Endothelial cell of umbilical vein (primary cell): ENCODE measurements at regions of chr2 and their contacts with region 1.

Region 1: GRCh38 chr2:66434679-66435548 is at the start of gene MEIS1:
- DNase-seq: peak; percentile 95
- H3K4me3 ChIP-seq: peak within 1 kb of the TSS; percentile 64 to 97 (median 97)
- H3K27ac ChIP-seq: peak within 1 kb of the TSS; percentile 87
- H3K4me1 ChIP-seq: peaks cover 23% of the 10 kb centered on the region
- H3K27me3 ChIP-seq: peaks cover 0 to 6% of the 10 kb centered on the region in 2 experiments
- CTCF ChIP-seq: no peak
- POLR2A ChIP-seq: peak; percentile 90
- total RNA-seq, gene MEIS1: 26.3 and 26.5 TPM in 2 replicates

Region 2: DNA sequence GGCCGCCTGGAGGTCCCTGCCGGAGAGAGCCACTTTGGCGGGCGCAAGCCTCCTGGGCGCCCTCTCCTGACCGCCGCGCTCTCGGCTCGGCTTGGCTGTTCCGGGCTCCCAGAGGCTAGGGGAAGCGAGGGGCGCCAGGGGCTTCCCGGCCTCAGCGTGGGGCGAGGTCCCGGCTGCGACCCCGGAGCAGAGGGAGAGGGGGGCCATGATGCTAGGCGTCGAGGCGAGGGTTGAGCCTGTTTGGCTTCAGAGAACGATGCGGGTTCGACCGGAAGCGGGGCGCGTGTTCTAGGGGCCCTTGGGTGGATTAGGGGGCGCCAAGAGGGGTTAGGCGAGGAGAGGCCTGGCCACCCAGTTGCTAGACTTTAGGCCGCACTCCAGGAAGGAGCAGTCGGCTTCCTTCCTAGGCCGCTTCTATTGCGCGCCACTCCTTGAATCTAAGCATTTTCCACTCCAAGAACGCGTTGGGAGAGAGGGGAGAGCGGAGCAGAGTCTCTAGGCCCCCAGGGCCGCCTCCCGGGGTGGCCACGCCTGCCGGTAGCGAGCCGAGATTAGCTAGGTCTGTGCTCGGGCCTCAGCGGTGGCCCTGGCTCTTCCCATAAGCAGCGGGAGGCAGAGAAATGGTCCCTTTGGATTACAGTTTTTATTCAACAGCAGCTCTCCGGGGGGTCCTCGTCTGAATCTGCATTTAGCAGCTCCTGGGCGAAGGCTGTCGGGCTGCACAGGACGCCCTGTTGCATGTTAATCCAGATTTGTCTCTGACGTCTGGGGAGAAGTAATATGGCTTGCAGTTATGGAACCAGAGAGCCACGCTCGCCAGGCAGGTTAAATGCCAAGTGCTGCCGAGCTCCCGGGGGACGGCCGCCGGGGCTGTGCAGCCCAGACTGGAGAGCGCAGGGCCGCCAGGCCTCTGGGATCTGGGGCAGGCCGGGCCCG is 11.3 kb after region 1 on chr2:
- CTCF ChIA-PET with region 1: interaction called, 11 read pairs
- POLR2A ChIA-PET with region 1: interaction called, 4 read pairs
- dilution Hi-C with region 1: no loop called
- intact Hi-C with region 1: no loop called
- DNase-seq: no peak
- H3K4me3 ChIP-seq: peak overlapping the region; percentile 3 to 46 (median 8)
- H3K27ac ChIP-seq: no peak overlapping the region
- H3K4me1 ChIP-seq: peaks cover 3% of the 10 kb centered on the region
- H3K27me3 ChIP-seq: no peaks in the 10 kb centered on the region
- CTCF ChIP-seq: peak; percentile 19 to 51
- POLR2A ChIP-seq: no peak

Region 3: DNA sequence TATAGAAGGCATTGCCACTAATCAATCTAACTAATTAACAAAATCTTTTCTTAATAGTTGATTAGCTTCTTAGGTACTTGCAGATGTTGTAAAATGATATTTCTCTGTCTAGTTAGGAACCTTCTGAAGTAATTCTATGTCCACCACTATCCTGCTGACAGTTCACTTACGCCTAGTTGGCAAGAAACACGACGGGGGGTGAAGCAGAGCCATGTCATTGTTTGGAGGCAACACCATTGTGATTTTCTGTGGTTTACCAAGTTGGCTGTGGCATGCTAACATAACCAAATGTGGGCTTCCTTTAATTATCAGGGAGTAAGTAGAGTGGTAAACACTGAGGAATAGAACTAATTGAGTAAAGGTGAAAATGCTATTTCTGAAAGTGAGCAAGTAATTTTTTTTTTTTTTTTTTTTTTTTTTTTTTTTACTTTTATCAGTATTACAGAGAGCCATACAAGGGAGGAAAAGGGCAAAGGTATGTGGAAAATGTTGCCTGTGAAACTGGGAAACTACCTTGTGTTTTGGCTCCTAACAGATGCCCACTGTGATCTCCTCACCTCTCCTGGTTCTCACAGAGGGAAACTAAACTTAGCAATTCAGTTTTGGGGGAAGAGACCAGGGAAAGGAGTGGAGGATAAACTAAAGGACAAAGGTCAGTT is 126.9 kb after region 1 on chr2:
- CTCF ChIA-PET with region 1: no interaction called
- POLR2A ChIA-PET with region 1: no interaction called
- dilution Hi-C with region 1: no loop called
- intact Hi-C with region 1: loop called (anchors 1 kb)
- DNase-seq: peak; percentile 34
- H3K4me3 ChIP-seq: no peak overlapping the region
- H3K27ac ChIP-seq: peak overlapping the region; percentile 55
- H3K4me1 ChIP-seq: peaks cover 20% of the 10 kb centered on the region
- H3K27me3 ChIP-seq: no peaks in the 10 kb centered on the region
- CTCF ChIP-seq: no peak
- POLR2A ChIP-seq: no peak

Region 4: DNA sequence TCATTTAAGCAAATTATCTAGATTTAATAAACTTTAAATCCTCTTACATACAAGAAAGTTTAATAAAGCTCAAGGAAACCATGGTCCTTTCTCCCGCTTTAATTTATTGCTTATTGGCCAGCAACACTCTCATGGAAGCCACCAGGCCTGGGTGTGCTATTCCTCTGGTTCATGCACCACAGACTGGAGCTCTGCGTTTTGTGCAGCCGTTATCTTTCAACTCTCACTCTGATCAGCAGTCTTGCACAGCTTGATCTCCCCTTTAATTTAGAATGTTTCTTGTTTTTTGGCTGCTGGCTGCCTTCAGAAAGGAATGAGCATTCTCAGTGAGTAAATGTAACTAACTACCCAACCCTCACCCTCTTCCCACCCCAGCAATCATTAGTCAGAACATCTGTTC is 318.7 kb after region 1 on chr2:
- CTCF ChIA-PET with region 1: no interaction called
- POLR2A ChIA-PET with region 1: no interaction called
- dilution Hi-C with region 1: no loop called
- intact Hi-C with region 1: no loop called
- DNase-seq: no peak
- H3K4me3 ChIP-seq: no peak overlapping the region
- H3K27ac ChIP-seq: no peak overlapping the region
- H3K4me1 ChIP-seq: no peaks in the 10 kb centered on the region
- H3K27me3 ChIP-seq: no peaks in the 10 kb centered on the region
- CTCF ChIP-seq: no peak
- POLR2A ChIP-seq: no peak

Region 5: GRCh38 chr2:67215214-67216055 is 780.5 kb after region 1 on chr2:
- CTCF ChIA-PET with region 1: interaction called, 12 read pairs
- POLR2A ChIA-PET with region 1: no interaction called
- dilution Hi-C with region 1: no loop called
- intact Hi-C with region 1: no loop called
- DNase-seq: peak; percentile 77
- H3K4me3 ChIP-seq: no peak overlapping the region
- H3K27ac ChIP-seq: no peak overlapping the region
- H3K4me1 ChIP-seq: no peaks in the 10 kb centered on the region
- H3K27me3 ChIP-seq: no peaks in the 10 kb centered on the region
- CTCF ChIP-seq: peak; percentile 74 to 85
- POLR2A ChIP-seq: no peak

Region 6: DNA sequence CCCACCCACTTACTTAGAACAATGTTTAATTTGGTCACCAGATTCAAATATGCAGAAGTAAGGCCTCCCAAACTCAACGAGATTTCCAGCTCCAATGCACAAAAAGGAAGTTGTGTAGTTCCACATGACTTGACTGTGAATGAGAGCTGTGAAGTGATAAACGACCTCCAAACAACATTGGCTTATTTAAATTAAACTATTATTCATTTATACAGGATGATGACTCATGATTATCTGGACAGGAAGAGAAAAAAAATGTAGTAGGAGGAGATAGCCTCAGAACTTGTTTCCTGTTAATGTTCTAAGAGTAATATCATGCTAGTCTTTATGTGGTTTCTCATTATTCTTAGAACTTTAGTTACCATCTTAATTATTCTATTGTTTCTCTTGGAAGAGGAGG is 1390.6 kb after region 1 on chr2:
- CTCF ChIA-PET with region 1: no interaction called
- POLR2A ChIA-PET with region 1: no interaction called
- dilution Hi-C with region 1: no loop called
- intact Hi-C with region 1: loop called (anchors 2 kb)
- DNase-seq: peak; percentile 92
- H3K4me3 ChIP-seq: peak overlapping the region in 1 of 3 experiments; percentile 43
- H3K27ac ChIP-seq: peak overlapping the region; percentile 80
- H3K4me1 ChIP-seq: peaks cover 22% of the 10 kb centered on the region
- H3K27me3 ChIP-seq: no peaks in the 10 kb centered on the region
- CTCF ChIP-seq: no peak
- POLR2A ChIP-seq: no peak

Region 7: DNA sequence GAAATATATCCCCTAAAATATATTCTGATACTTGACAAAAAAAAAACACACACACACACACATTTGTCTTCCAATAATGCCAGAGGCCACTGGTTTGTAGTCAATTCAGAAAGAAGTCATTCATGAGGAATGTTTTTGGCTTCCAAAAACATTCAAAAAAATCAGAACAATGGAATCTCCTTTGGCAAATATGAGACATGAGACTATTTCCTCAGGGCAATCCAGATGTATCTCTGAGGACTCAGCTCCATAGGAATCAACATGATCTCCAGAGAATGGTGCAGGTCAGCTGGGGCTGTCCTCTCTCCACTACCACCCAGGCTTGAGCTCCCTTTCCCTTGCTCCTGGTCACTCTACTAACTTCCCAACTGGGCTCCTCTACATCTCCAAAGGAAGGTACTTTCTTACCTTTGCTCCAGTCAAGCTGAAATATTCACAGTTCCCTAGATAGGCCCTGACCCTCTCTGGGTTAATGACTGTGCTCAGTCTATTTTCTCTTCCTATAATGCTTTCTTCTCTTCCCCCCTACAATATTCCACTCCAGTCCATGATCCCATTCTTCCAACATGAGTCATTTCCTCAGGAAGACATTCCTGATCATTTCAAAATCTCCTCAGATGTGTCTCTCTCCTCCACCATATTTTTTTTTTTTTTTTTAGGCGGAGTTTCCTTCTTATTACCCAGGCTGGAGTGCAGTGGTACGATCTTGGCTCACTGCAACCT is 1482.6 kb after region 1 on chr2:
- CTCF ChIA-PET with region 1: no interaction called
- POLR2A ChIA-PET with region 1: no interaction called
- dilution Hi-C with region 1: no loop called
- intact Hi-C with region 1: loop called (anchors 2 kb)
- DNase-seq: peak; percentile 90
- H3K4me3 ChIP-seq: no peak overlapping the region
- H3K27ac ChIP-seq: peak overlapping the region; percentile 96
- H3K4me1 ChIP-seq: peaks cover 28% of the 10 kb centered on the region
- H3K27me3 ChIP-seq: no peaks in the 10 kb centered on the region
- CTCF ChIP-seq: no peak
- POLR2A ChIP-seq: no peak